Breast epithelium (tissue), 4 donors: ENCODE measurements at regions of chr3 and their contacts with region 1.

Region 1: GRCh38 chr3:9792405-9793160 is at the starts of genes ARPC4 and TADA3:
- DNase-seq: peak; percentile 87 to 88
- H3K4me3 ChIP-seq: peak within 1 kb of the TSS; percentile 91 to 100 (median 100)
- H3K27ac ChIP-seq: peak within 1 kb of the TSS; percentile 99
- H3K4me1 ChIP-seq: peaks cover 0 to 11% of the 10 kb centered on the region in 2 donors
- H3K27me3 ChIP-seq: no peaks in the 10 kb centered on the region
- CTCF ChIP-seq: peak in 2 of 3 donors; percentile 28 to 40
- POLR2A ChIP-seq: peak; percentile 67
- total RNA-seq, gene ARPC4: 116 to 163 (median 117) TPM
- total RNA-seq, gene TADA3: 66.1 to 73.4 (median 70.1) TPM

Region 2: GRCh38 chr3:9396700-9397521 is 395.7 kb before region 1 on chr3:
- intact Hi-C with region 1: loop called (anchors 10 kb)
- DNase-seq: peak; percentile 99
- H3K4me3 ChIP-seq: peak overlapping the region; percentile 95 to 97 (median 95)
- H3K27ac ChIP-seq: peak overlapping the region; percentile 100
- H3K4me1 ChIP-seq: peaks cover 3 to 26% of the 10 kb centered on the region in 2 donors
- H3K27me3 ChIP-seq: no peaks in the 10 kb centered on the region
- CTCF ChIP-seq: peak; percentile 2 to 37 (median 19)
- POLR2A ChIP-seq: peak; percentile 97

Region 3: GRCh38 chr3:9731206-9732079 is 61.1 kb before region 1 on chr3 and contains the start of gene BRPF1:
- intact Hi-C with region 1: no loop called
- DNase-seq: peak; percentile 99 to 100
- H3K4me3 ChIP-seq: peak within 1 kb of the TSS; percentile 74 to 100 (median 99)
- H3K27ac ChIP-seq: peak within 1 kb of the TSS; percentile 97 to 98
- H3K4me1 ChIP-seq: peaks cover 8 to 20% of the 10 kb centered on the region in 2 donors
- H3K27me3 ChIP-seq: no peaks in the 10 kb centered on the region
- CTCF ChIP-seq: peak in 1 of 3 donors; percentile 25
- POLR2A ChIP-seq: no peak
- total RNA-seq, gene BRPF1: 14.7 to 19.7 (median 19.3) TPM

Region 4: DNA sequence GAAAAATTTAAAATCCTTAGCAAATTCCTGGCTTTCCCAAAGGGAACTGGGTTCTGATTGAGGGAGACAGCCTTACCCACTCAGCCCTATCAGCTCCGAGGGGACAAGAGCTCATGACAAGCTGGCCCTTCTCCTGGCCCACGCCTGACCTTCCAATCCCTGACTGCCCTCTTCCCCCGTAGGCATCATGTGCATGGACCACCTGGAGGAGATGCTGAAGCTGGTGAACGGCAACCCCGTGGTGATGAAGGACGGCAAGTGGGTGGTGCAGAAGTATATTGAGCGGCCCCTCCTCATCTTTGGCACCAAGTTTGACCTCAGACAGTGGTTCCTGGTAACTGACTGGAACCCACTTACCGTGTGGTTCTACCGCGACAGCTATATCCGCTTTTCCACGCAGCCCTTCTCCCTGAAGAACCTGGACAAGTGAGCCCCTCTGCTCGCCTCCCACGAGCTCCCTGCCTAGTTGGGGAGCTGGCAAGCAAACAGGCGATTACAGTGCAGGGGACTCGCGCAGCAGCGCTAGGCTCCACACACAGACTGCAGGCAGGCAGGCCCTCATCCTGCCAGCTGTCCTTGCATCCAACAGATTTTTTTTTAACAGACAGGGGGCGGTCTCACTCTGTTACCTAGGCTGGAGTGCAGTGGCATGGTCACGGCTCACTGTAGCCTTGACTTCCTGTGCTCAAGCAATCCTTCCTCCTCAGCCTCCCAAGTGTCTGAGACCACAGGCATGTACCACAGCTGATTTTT is 34.4 kb after region 1 on chr3:
- intact Hi-C with region 1: no loop called
- DNase-seq: no peak
- H3K4me3 ChIP-seq: no peak overlapping the region
- H3K27ac ChIP-seq: no peak overlapping the region
- H3K4me1 ChIP-seq: no peaks in the 10 kb centered on the region
- H3K27me3 ChIP-seq: no peaks in the 10 kb centered on the region
- CTCF ChIP-seq: peak in 2 of 3 donors; percentile 10 to 12
- POLR2A ChIP-seq: no peak

Region 5: GRCh38 chr3:9837701-9838582 is 45.4 kb after region 1 on chr3:
- intact Hi-C with region 1: no loop called
- DNase-seq: no peak
- H3K4me3 ChIP-seq: no peak overlapping the region
- H3K27ac ChIP-seq: no peak overlapping the region
- H3K4me1 ChIP-seq: peaks cover 0 to 3% of the 10 kb centered on the region in 2 donors
- H3K27me3 ChIP-seq: no peaks in the 10 kb centered on the region
- CTCF ChIP-seq: no peak
- POLR2A ChIP-seq: no peak

Region 6: GRCh38 chr3:11335056-11335608 is 1542.5 kb after region 1 on chr3:
- intact Hi-C with region 1: loop called (anchors 5 kb)
- DNase-seq: no peak
- H3K4me3 ChIP-seq: no peak overlapping the region
- H3K27ac ChIP-seq: no peak overlapping the region
- H3K4me1 ChIP-seq: no peaks in the 10 kb centered on the region
- H3K27me3 ChIP-seq: no peaks in the 10 kb centered on the region
- CTCF ChIP-seq: peak; percentile 38 to 69 (median 63)
- POLR2A ChIP-seq: no peak